ENCODE measurements at regions of chr12 and their contacts with region 1.

Region 1: DNA sequence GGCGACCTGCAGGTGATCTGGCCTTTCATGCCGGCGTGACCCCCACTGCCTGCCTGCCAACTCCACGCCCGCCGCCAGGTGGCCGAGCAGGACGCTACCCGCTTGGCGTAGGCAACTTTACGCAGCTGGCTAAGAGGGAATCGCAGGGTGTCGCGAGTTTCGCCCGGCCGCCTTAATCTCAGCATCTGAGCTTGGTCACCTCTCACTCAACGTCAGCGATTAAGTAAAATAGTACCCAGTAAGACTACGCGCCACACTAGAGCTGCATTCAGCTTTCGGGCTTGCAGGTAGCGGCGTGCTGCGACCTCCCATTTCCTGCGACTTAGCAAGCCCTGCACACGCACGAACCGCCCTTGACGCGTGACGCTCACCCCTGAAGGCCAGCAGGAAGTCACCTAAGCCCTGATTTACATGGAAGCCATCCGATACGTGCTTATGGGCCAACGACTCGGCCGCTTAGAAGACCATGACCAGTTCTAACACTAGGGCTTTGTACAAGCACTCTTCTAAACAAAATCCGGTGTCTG is 33.2 kb downstream of the WBP11 start:
- DNase-seq: peak; percentile 83
- H3K4me3 ChIP-seq: peak overlapping the region; percentile 64 to 96 (median 77)
- H3K27ac ChIP-seq: peak overlapping the region; percentile 90
- H3K4me1 ChIP-seq: peaks cover 9% of the 10 kb centered on the region
- H3K27me3 ChIP-seq: no peaks in the 10 kb centered on the region
- CTCF ChIP-seq: peak; percentile 65 to 89

Region 2: GRCh38 chr12:14207905-14208551 is 562.0 kb before region 1 on chr12:
- CTCF ChIA-PET with region 1: no interaction called
- dilution Hi-C with region 1: no loop called
- in situ Hi-C with region 1: no loop called
- intact Hi-C with region 1: no loop called
- DNase-seq: peak; percentile 79
- H3K4me3 ChIP-seq: no peak overlapping the region
- H3K27ac ChIP-seq: no peak overlapping the region
- H3K4me1 ChIP-seq: peaks cover 11% of the 10 kb centered on the region
- H3K27me3 ChIP-seq: no peaks in the 10 kb centered on the region
- CTCF ChIP-seq: no peak

Region 3: GRCh38 chr12:14691560-14691959 is 78.5 kb before region 1 on chr12:
- CTCF ChIA-PET with region 1: no interaction called
- dilution Hi-C with region 1: no loop called
- in situ Hi-C with region 1: no loop called
- intact Hi-C with region 1: no loop called
- DNase-seq: no peak
- H3K4me3 ChIP-seq: no peak overlapping the region
- H3K27ac ChIP-seq: no peak overlapping the region
- H3K4me1 ChIP-seq: no peaks in the 10 kb centered on the region
- H3K27me3 ChIP-seq: no peaks in the 10 kb centered on the region
- CTCF ChIP-seq: no peak

Region 4: DNA sequence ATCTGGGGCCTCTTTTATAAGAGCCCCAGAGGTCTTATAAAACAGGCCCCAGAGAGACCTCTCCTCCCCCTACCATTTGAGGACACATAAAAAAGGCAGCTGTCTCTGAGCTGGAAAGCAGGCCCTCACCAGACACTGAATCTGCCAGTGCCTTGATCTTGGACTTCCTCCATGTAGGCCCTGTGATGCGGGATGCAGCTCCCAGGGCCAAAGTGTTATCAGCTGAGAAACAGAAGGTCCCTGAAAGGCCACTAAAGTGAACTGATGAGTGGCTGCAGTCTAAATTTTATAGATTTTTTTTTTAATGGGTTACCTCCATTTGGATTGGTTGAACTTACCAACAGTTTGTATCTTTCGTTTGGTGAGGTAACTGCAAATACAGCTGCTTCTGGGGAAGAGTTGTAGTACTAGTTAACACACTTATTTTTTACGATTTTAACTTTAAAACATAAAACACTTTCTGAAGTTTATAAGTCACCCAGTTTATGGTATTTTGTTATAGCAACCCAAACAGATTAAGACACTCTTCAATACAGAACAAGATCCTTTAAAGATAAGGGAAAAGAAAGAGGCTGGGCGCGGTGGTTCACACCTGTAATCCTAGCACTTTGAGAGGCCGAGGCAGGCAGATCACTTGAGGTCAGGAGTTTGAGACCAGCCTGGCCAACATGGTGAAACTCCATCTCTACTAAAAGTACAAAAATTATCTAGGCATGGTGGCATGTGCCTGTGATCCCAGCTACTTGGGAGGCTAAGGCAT is 68.0 kb before region 1 on chr12:
- CTCF ChIA-PET with region 1: no interaction called
- dilution Hi-C with region 1: no loop called
- in situ Hi-C with region 1: no loop called
- intact Hi-C with region 1: no loop called
- DNase-seq: no peak
- H3K4me3 ChIP-seq: no peak overlapping the region
- H3K27ac ChIP-seq: no peak overlapping the region
- H3K4me1 ChIP-seq: no peaks in the 10 kb centered on the region
- H3K27me3 ChIP-seq: no peaks in the 10 kb centered on the region
- CTCF ChIP-seq: no peak

Region 5: DNA sequence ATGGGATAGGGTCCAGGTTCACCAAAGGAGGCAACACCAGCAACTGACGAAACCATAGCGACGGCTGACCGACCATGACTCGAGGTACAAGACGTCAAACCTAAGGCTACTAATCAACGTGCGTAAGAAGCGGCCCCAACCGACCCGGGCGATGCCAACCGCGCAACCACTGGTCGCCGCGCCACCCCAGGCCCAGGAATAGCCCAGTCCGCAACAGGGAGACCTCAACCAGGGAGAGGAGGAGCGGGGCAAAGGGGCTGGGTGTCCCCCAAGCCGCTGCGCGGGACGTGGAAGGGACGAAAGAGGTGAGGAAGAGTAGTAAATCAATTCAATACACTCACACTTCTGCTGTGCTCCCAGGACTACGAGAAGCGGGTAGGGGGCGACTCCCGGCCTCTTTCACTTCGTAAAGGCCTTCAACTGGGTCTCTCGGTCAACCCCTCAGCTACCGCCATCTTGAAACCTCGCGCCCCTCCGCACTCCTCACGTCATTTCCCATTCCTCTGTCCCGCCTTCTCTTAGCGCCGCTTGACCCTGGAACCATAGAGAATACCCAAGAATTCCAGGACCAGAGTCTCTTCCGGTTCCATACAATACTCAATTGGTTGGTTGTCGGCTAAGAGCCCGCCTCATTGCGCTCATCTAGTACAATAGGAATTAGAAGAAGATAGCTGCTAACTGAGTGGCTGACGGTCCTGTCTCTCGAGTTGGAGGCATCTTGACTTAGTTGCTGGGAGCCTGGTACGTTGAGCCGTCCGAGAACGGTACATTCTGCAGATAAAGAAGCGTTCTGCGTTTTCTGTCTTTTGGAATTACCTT is 33.2 kb after region 1 on chr12 and contains the starts of genes C12orf60 and WBP11:
- CTCF ChIA-PET with region 1: no interaction called
- dilution Hi-C with region 1: no loop called
- in situ Hi-C with region 1: no loop called
- intact Hi-C with region 1: loop called (anchors 1 kb)
- DNase-seq: peak; percentile 99
- H3K4me3 ChIP-seq: peak within 1 kb of the TSS; percentile 70 to 100 (median 99)
- H3K27ac ChIP-seq: peak within 1 kb of the TSS; percentile 99
- H3K4me1 ChIP-seq: peaks cover 14% of the 10 kb centered on the region
- H3K27me3 ChIP-seq: no peaks in the 10 kb centered on the region
- CTCF ChIP-seq: no peak
- total RNA-seq, gene C12orf60: 0.83 to 1.3 TPM
- total RNA-seq, gene WBP11: 12.0 to 61.2 TPM

Region 6: DNA sequence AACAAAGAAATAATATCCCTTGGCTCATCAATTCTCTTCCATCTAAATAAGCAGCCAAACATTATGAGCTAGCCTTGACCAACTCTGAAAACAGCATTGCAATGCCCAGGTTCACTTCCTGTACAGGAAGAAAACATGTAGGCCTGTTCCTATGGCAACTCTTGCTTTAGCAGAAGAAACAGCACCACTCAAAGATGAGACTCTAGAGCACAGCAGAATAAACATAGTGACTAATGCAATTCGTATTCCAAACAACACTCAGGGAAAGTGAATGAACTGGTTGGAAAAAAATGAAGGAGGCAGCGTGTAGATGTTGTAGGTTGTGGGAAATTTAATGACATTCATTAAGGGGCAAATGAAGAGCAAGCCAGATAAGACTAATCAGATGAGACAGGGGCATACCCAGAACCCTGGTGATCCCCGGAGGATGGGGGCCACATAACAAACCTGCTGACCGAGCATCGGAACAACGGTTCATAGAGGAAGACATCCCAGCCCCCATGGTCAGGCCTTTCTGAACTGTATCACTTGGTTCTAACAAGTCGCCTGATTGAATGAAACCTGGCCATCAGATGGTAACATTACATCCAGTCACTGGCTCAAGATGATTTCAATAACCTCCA is 182.4 kb after region 1 on chr12:
- CTCF ChIA-PET with region 1: no interaction called
- dilution Hi-C with region 1: no loop called
- in situ Hi-C with region 1: no loop called
- intact Hi-C with region 1: loop called (anchors 5 kb)
- DNase-seq: peak; percentile 95
- H3K4me3 ChIP-seq: no peak overlapping the region
- H3K27ac ChIP-seq: peak overlapping the region; percentile 95
- H3K4me1 ChIP-seq: peaks cover 40% of the 10 kb centered on the region
- H3K27me3 ChIP-seq: no peaks in the 10 kb centered on the region
- CTCF ChIP-seq: no peak

Measured in mammary epithelial cell (primary cell).